Dendritic cell treated with granulocyte-macrophage colony-stimulating factor and Interleukin-4, amounts not matched to agents 40 ng/mL and 50 ng/mL, for 4 days (primary cell): ENCODE measurements at regions of chr2 and their contacts with region 1.

Region 1: DNA sequence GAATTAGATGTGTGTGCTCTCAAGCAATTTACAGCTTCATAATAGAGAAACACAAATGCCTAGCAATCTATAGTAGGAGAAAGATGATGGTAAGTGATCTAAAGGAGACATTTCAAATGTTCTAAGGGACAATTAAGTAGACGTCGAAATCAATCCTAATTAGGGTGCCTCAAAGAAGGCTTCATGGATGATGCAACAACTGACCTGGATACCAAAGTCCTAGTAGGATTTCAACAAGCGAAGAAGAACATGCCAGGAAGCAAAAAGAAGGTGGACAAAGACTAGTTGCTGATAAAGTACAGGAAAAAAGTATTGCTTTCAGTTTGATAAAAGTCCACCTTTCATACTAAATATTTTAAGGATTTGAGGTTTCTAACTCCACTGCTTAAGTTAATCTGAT is 12.5 kb downstream of the FIGN start:
- H3K4me3 Mint-ChIP-seq: no peak overlapping the region
- H3K27ac Mint-ChIP-seq: no peak overlapping the region
- H3K4me1 Mint-ChIP-seq: no peaks in the 10 kb centered on the region
- H3K27me3 Mint-ChIP-seq: no peaks in the 10 kb centered on the region

Region 2: GRCh38 chr2:163737190-163737439 is 13.8 kb after region 1 on chr2:
- intact Hi-C with region 1: loop called (anchors 2 kb)
- H3K4me3 Mint-ChIP-seq: no peak overlapping the region
- H3K27ac Mint-ChIP-seq: no peak overlapping the region
- H3K4me1 Mint-ChIP-seq: peaks cover 11% of the 10 kb centered on the region
- H3K27me3 Mint-ChIP-seq: peaks cover 42% of the 10 kb centered on the region